ENCODE measurements at regions of chr5 and their contacts with region 1.

Region 1: DNA sequence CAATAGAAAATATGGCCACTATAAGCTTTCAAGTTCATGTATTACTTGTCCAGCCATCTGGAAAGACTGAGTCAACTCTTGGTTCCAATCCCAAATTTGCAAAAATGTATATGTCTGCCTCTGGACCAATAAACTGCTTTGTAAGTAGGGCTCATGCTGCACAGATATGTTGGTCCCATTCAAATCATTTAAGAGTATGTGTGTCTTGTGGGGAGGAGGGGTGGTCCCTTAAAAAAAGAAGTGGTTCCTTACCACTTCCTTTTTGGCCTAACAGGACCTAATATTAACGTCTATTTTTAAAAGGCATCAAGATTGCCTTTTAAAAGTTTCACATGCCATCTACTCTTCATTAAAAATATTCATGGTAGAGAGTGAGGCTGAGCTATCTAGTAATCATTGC is 214.9 kb downstream of the KCTD16 start:
- DNase-seq: no peak
- H3K4me3 ChIP-seq: no peak overlapping the region
- H3K27ac ChIP-seq: no peak overlapping the region
- H3K27me3 ChIP-seq: no peaks in the 10 kb centered on the region
- CTCF ChIP-seq: no peak

Region 2: GRCh38 chr5:143177263-143177983 is 1208.2 kb before region 1 on chr5:
- intact Hi-C with region 1: loop called in 1 of 2 experiments (anchors 10 kb)
- DNase-seq: peak in 7 of 10 donors; percentile 45 to 70 (median 60)
- H3K4me3 ChIP-seq: no peak overlapping the region
- H3K27ac ChIP-seq: peak overlapping the region in 37 of 59 donors; percentile 2 to 72 (median 49)
- H3K27me3 ChIP-seq: no peaks in the 10 kb centered on the region
- CTCF ChIP-seq: no peak